ENCODE measurements at regions of chr5 and their contacts with region 1.

Region 1: GRCh38 chr5:54646356-54647101 is 129.0 kb downstream of the SNX18 start:
- DNase-seq: peak; percentile 94
- H3K4me3 Mint-ChIP-seq: peak overlapping the region; percentile 74
- H3K27ac Mint-ChIP-seq: peak overlapping the region; percentile 87
- H3K4me1 Mint-ChIP-seq: peaks cover 50% of the 10 kb centered on the region
- H3K27me3 Mint-ChIP-seq: no peaks in the 10 kb centered on the region

Region 2: DNA sequence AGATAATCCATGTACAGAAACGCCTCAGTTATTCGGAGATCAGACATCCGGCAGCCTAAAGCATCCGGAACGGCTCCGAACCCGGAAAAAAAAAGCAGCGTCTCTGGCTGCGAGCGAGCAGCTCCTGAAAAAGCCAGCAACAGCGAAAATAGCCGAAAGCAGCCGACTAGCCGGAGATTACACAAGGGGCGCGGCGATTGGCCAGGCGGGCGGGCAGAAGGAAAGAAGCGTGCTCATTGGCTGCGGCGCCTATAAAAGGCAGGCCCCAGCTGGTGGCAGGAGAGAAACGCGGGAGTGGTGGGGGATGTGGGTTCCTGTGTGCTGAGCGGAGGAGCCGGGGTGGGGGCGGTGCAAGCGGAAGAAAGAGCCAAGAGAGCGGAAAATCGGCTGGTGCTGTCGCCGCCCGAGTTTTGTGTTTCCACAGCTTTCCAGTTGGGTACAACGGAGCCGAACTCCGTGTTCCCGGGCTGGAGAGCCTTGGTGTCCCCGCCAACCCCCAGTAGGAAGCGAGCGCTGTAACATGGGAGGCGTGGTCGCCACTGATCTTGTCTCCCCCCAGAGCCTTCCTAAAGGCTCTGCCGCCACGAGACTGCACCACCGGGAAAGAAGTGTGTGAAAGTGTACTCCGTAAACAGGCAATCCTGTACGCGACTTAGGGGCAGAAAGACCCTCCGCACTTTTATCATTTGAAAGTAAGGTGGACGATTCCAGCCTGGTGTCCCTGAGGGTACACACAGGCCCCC is 335.9 kb before region 1 on chr5 and contains the start of gene ARL15:
- intact Hi-C with region 1: loop called (anchors 5 kb)
- DNase-seq: peak; percentile 99
- H3K4me3 Mint-ChIP-seq: peak within 1 kb of the TSS; percentile 88
- H3K27ac Mint-ChIP-seq: peak within 1 kb of the TSS; percentile 88
- H3K4me1 Mint-ChIP-seq: peaks cover 22% of the 10 kb centered on the region
- H3K27me3 Mint-ChIP-seq: peaks cover 18% of the 10 kb centered on the region
- total RNA-seq, gene ARL15: 4.5 and 7.4 TPM in 2 replicates

Region 3: GRCh38 chr5:54610197-54610944 is 36.2 kb before region 1 on chr5:
- intact Hi-C with region 1: loop called (anchors 1 kb)
- DNase-seq: peak; percentile 84
- H3K4me3 Mint-ChIP-seq: peak overlapping the region; percentile 62
- H3K27ac Mint-ChIP-seq: peak overlapping the region; percentile 78
- H3K4me1 Mint-ChIP-seq: peaks cover 25% of the 10 kb centered on the region
- H3K27me3 Mint-ChIP-seq: no peaks in the 10 kb centered on the region

Region 4: GRCh38 chr5:54719384-54720283 is 73.1 kb after region 1 on chr5:
- intact Hi-C with region 1: loop called (anchors 1 kb)
- DNase-seq: no peak
- H3K4me3 Mint-ChIP-seq: no peak overlapping the region
- H3K27ac Mint-ChIP-seq: peak overlapping the region; percentile 54
- H3K4me1 Mint-ChIP-seq: peaks cover 25% of the 10 kb centered on the region
- H3K27me3 Mint-ChIP-seq: peaks cover 2% of the 10 kb centered on the region

Region 5: DNA sequence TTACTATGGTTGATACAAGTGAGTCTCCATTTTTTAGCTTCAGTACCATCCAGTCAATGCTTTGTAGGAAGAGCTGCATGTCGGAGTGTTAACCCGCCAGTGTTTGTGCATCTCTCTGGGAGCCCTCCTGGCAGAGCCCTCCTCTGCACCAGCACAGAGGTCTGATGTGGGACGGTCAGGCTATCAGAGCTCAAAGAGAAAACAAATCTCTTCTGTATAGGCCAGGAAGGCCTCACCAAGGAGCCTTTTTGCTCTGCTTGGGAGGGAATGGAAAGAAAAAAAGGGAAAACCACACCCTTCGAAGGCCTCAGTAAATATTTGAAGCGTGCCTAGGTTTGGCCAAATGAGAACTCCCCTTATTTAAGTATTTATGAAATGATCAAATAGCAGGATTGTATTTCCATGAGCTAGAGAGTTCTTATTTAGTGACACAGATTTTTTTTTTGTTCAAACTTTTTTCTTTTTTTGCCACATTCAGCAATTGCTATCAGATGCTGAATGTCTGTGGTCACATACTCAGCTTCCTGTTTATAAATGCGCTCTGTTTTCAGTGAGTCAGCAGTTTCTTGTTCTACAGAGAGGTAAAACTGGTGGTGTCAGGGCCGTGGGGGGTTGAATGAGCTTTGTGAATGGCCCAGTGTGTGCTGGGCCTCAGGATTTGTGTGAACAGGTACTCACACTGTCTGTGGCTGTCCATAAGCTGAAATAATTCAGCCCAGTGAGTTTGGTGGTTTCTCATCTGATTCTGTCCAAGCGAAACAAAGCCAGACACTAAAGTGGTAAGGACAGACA is 97.7 kb after region 1 on chr5:
- intact Hi-C with region 1: loop called (anchors 2 kb)
- DNase-seq: peak; percentile 88
- H3K4me3 Mint-ChIP-seq: peak overlapping the region; percentile 57
- H3K27ac Mint-ChIP-seq: peak overlapping the region; percentile 77
- H3K4me1 Mint-ChIP-seq: peaks cover 44% of the 10 kb centered on the region
- H3K27me3 Mint-ChIP-seq: peaks cover 4% of the 10 kb centered on the region

Region 6: GRCh38 chr5:54793468-54794134 is 147.1 kb after region 1 on chr5:
- intact Hi-C with region 1: loop called (anchors 1 kb)
- DNase-seq: peak; percentile 66
- H3K4me3 Mint-ChIP-seq: peak overlapping the region; percentile 43
- H3K27ac Mint-ChIP-seq: peak overlapping the region; percentile 88
- H3K4me1 Mint-ChIP-seq: peaks cover 34% of the 10 kb centered on the region
- H3K27me3 Mint-ChIP-seq: peaks cover 16% of the 10 kb centered on the region

Region 7: DNA sequence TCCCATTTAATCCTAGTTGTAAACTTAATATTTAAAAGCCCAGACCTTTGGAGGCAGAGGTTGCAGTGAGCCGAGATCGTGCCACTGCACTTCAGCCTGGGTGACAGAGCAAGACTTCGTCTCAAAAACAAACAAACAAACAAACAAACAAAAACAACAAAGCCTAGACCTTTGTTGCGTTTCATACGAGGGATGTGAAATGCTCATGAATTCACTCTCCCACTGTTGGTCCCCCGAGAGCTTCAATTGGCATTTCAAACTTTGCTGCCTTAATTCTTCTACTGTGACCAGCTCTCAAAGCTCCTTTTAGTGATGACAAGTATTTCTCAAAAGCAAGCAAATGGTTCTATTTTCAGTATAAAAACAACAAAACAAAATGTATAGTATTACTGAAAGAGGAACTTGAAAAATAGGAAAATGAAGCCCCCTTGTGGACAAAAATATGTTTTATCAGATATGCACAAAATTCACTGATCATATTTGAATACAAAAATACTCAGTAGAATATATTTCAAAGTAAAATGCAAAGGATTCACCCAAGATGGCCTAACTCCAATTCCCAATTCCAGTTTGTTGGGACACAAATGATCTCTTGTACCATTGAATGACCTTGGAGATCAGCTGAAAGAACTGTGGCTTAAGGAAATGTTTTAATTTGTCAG is 198.5 kb after region 1 on chr5:
- intact Hi-C with region 1: loop called (anchors 2 kb)
- DNase-seq: peak; percentile 68
- H3K4me3 Mint-ChIP-seq: peak overlapping the region; percentile 56
- H3K27ac Mint-ChIP-seq: peak overlapping the region; percentile 18
- H3K4me1 Mint-ChIP-seq: peaks cover 13% of the 10 kb centered on the region
- H3K27me3 Mint-ChIP-seq: peaks cover 22% of the 10 kb centered on the region

Measured in activated CD4-positive, alpha-beta T cell treated with anti-CD3 and anti-CD28 coated beads, Interleukin-2, amount 10 ng/mL, durations not matched to agents 24 days and 14 days (primary cell).